Activated CD8-positive, alpha-beta memory T cell treated with anti-CD3 and anti-CD28 coated beads, Interleukin-2, amount 10 ng/mL, durations not matched to agents 7 days and 5 days (primary cell): ENCODE measurements at regions of chr9 and their contacts with region 1.

Region 1: GRCh38 chr9:98998441-98999151 is 54.9 kb downstream of the COL15A1 start:
- DNase-seq: peak; percentile 70
- ATAC-seq: peak; percentile 74
- H3K4me3 Mint-ChIP-seq: no peak overlapping the region
- H3K27ac Mint-ChIP-seq: no peak overlapping the region
- H3K4me1 Mint-ChIP-seq: peaks cover 33% of the 10 kb centered on the region
- H3K27me3 Mint-ChIP-seq: peaks cover 26% of the 10 kb centered on the region

Region 2: GRCh38 chr9:98951967-98952366 is 46.6 kb before region 1 on chr9:
- CTCF ChIA-PET with region 1: no interaction called
- DNase-seq: no peak
- ATAC-seq: no peak
- H3K4me3 Mint-ChIP-seq: no peak overlapping the region
- H3K27ac Mint-ChIP-seq: no peak overlapping the region
- H3K4me1 Mint-ChIP-seq: no peaks in the 10 kb centered on the region
- H3K27me3 Mint-ChIP-seq: peaks cover 44% of the 10 kb centered on the region

Region 3: DNA sequence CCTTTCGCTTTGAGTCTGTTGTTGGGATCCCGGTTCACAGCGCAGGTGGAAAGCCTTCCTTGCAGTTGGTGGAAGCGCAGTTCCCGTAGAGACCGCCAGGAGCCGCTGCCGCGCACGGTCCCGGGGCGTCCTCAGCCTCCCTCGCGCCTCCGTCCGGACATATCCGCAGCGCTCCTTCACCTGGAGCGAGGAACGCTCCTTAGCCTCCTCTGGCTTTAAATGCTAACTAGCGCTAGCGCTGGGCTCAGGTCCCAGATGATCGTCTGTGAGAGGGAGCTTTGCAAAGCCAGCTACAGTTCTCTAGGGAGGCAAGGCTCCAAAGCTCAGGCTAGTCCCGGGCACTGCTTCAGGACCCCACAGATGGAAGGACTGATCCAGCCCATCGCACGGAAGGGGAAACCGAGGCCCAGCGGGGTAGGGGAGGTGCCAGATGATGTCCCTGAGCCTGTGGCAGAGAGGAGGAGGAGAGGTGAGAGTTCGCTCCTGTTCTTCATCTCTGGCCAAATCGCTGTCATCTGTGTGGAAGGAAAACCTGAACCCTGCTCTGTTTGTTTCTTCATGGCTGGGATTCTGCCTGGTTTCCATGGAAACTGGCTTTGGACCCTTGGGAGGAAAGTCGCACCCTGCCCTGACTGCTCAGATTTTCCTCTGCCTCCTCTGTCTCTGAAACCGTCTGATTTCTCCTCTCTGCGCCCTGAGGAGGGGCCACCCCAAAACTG is 23.4 kb before region 1 on chr9:
- CTCF ChIA-PET with region 1: interaction called, 22 read pairs
- DNase-seq: peak; percentile 86
- ATAC-seq: peak; percentile 94
- H3K4me3 Mint-ChIP-seq: peak overlapping the region; percentile 25
- H3K27ac Mint-ChIP-seq: no peak overlapping the region
- H3K4me1 Mint-ChIP-seq: peaks cover 11% of the 10 kb centered on the region
- H3K27me3 Mint-ChIP-seq: peaks cover 37% of the 10 kb centered on the region

Region 4: GRCh38 chr9:99050292-99050911 is 51.8 kb after region 1 on chr9:
- CTCF ChIA-PET with region 1: interaction called, 14 read pairs
- DNase-seq: no peak
- ATAC-seq: no peak
- H3K4me3 Mint-ChIP-seq: no peak overlapping the region
- H3K27ac Mint-ChIP-seq: no peak overlapping the region
- H3K4me1 Mint-ChIP-seq: peaks cover 68% of the 10 kb centered on the region
- H3K27me3 Mint-ChIP-seq: no peaks in the 10 kb centered on the region

Region 5: GRCh38 chr9:99066571-99067078 is 68.0 kb after region 1 on chr9:
- CTCF ChIA-PET with region 1: no interaction called
- DNase-seq: no peak
- ATAC-seq: no peak
- H3K4me3 Mint-ChIP-seq: no peak overlapping the region
- H3K27ac Mint-ChIP-seq: no peak overlapping the region
- H3K4me1 Mint-ChIP-seq: peaks cover 51% of the 10 kb centered on the region
- H3K27me3 Mint-ChIP-seq: no peaks in the 10 kb centered on the region

Region 6: DNA sequence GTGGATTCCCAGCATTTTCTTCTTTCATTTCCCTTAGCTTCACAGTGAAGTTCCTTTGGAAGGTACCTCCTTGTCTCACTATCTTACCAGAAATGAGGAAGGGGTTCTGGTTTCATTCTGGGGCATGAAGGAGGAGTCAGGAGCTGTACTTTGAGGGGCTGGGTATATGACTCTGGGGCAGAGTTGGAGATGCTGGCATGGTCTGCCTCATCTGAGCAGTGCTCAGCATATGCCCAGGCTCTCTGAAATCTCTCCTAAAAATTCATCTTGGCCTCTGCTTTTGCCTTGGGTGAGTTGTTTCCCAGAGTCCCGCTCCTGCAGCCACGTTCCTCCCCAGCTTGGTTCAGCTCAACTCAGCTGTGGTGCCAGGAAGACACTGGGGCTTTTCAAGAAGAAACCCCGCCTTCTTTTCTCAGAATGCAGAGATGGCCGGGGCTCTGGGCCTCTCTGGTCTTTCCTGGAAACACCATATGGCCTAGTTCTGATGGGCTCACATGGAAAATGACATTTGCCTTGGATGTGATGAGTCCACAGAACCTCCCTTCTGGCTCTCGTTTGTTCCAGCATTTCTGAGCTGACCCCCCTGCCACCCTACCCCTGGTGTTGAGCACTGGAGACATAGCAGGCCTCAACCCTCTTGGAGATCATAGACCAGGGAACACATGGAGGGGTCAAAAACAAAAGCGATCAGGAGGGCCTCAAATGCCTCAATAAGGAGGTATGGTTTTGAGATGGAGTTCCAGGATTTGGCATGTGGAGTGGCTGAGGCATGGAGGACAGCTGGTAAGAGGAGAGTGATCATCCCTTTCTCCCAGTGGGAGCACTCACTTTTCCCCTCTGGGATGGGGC is 94.3 kb after region 1 on chr9:
- CTCF ChIA-PET with region 1: interaction called, 11 read pairs
- DNase-seq: peak; percentile 91
- ATAC-seq: peak; percentile 89
- H3K4me3 Mint-ChIP-seq: peak overlapping the region; percentile 57
- H3K27ac Mint-ChIP-seq: peak overlapping the region; percentile 99
- H3K4me1 Mint-ChIP-seq: peaks cover 69% of the 10 kb centered on the region
- H3K27me3 Mint-ChIP-seq: no peaks in the 10 kb centered on the region

Region 7: DNA sequence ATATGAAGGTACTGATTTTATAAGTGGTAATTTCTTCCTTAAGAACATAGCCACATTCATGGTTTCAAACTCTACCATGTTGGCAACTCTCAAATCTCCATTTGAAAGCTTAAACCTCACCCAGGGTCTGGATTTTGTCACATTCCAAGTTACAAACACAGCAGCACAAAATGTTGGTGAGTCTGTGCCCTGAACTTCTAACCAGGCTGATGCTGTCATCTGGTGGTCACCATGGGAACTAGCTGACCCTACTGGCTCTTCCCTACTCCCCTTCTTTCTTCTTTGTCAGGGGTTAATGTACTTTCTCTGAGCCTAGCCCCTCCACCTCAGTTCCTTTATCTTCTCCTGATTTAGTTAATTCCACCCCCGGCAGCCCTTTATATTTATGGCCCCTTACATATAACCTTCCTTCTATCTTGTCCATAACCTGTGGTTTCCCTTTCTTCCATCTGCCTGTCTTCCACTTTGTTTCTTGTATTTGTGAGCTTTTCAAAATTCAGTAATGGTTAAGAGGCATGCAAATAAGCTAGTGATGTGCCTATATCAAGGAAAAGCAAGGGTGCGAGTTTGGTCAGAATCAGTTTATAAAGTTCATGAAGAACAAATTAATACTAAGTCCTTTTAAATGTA is 142.2 kb after region 1 on chr9:
- CTCF ChIA-PET with region 1: interaction called, 179 read pairs
- DNase-seq: peak; percentile 61
- ATAC-seq: peak; percentile 77
- H3K4me3 Mint-ChIP-seq: no peak overlapping the region
- H3K27ac Mint-ChIP-seq: peak overlapping the region; percentile 68
- H3K4me1 Mint-ChIP-seq: peaks cover 32% of the 10 kb centered on the region
- H3K27me3 Mint-ChIP-seq: no peaks in the 10 kb centered on the region

Region 8: GRCh38 chr9:99189887-99190596 is 191.4 kb after region 1 on chr9:
- CTCF ChIA-PET with region 1: no interaction called
- DNase-seq: no peak
- ATAC-seq: no peak
- H3K4me3 Mint-ChIP-seq: no peak overlapping the region
- H3K27ac Mint-ChIP-seq: no peak overlapping the region
- H3K4me1 Mint-ChIP-seq: peaks cover 25% of the 10 kb centered on the region
- H3K27me3 Mint-ChIP-seq: peaks cover 4% of the 10 kb centered on the region

Region 9: GRCh38 chr9:99286536-99286935 is 287.9 kb after region 1 on chr9:
- CTCF ChIA-PET with region 1: no interaction called
- DNase-seq: no peak
- ATAC-seq: no peak
- H3K4me3 Mint-ChIP-seq: no peak overlapping the region
- H3K27ac Mint-ChIP-seq: no peak overlapping the region
- H3K4me1 Mint-ChIP-seq: peaks cover 10% of the 10 kb centered on the region
- H3K27me3 Mint-ChIP-seq: peaks cover 23% of the 10 kb centered on the region